K562 (cell line): ENCODE measurements at regions of chr1 and their contacts with region 1.

Region 1: GRCh38 chr1:206674745-206675175 is 9.9 kb upstream of the MAPKAPK2 start:
- DNase-seq: peak in 2 of 4 experiments; percentile 62 to 69
- ATAC-seq: no peak
- H3K4me3 ChIP-seq: no peak overlapping the region
- H3K27ac ChIP-seq: no peak overlapping the region; the same call in 2 of the 3 replicates
- H3K4me1 ChIP-seq: peaks cover 42 to 72% of the 10 kb centered on the region in 2 experiments
- H3K27me3 ChIP-seq: no peaks in the 10 kb centered on the region
- CTCF ChIP-seq: no peak
- EP300 ChIP-seq: no peak
- POLR2A ChIP-seq: no peak
- RAD21 ChIP-seq: no peak

Region 2: DNA sequence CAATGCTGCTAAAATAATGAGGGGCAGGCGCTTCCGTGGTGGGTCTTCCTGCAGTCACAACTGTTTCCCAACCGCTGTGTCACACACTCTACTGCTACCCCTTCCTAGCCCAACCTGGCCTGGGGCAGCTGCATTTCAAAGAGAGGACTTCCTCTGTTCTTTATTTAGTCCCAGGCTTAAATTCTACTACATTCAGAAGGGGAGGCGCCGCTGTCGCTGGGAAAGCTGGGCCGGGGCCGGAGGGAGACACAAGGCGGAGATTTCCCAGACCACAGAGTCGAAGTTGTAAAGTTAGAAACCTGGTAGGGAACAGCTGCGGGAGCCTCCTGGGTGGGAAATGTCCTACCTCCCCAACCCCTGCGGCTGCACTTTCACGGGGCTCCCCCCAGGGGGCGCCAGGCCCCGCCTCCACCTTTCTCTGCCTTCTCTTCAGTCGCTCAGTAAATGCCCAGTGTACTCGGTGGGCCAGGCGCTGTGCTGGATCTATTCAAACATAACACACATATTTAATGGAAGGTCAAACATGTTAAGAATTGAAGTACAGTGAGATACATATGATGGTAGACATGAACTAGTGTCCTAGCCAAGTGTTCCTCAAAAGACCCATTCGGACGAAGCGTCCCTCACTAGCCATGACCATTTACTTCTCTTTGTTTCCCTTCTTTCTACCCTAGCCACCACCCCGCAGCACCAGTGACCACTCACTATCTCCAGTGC is 16.3 kb before region 1 on chr1:
- CTCF ChIA-PET with region 1: no interaction called
- POLR2A ChIA-PET with region 1: interaction called, 21 read pairs
- in situ Hi-C with region 1: no loop called
- intact Hi-C with region 1: no loop called
- DNase-seq: peak; percentile 89 to 95 (median 92)
- ATAC-seq: peak; percentile 89
- H3K4me3 ChIP-seq: no peak overlapping the region
- H3K27ac ChIP-seq: peak overlapping the region; percentile 65; the same call in 2 of the 3 replicates
- H3K4me1 ChIP-seq: peaks cover 30 to 58% of the 10 kb centered on the region in 2 experiments
- H3K27me3 ChIP-seq: no peaks in the 10 kb centered on the region
- CTCF ChIP-seq: peak; percentile 93 to 100 (median 95)
- EP300 ChIP-seq: no peak
- POLR2A ChIP-seq: 0 out of 2 replicates have a peak, but pooled peaks have one; percentile 33
- RAD21 ChIP-seq: peak; percentile 78 to 87